ENCODE measurements at regions of chr9 and their contacts with region 1.

Region 1: GRCh38 chr9:26975693-26976059 is 19.5 kb downstream of the IFT74 start:
- DNase-seq: peak; percentile 56
- H3K4me3 ChIP-seq: no peak overlapping the region
- H3K27ac ChIP-seq: no peak overlapping the region
- H3K4me1 ChIP-seq: peaks cover 0 to 3% (median 0%) of the 10 kb centered on the region in 4 donors
- H3K27me3 ChIP-seq: no peaks in the 10 kb centered on the region
- CTCF ChIP-seq: peak; percentile 58 to 70 (median 60)
- EP300 ChIP-seq: no peak
- POLR2A ChIP-seq: no peak

Region 2: DNA sequence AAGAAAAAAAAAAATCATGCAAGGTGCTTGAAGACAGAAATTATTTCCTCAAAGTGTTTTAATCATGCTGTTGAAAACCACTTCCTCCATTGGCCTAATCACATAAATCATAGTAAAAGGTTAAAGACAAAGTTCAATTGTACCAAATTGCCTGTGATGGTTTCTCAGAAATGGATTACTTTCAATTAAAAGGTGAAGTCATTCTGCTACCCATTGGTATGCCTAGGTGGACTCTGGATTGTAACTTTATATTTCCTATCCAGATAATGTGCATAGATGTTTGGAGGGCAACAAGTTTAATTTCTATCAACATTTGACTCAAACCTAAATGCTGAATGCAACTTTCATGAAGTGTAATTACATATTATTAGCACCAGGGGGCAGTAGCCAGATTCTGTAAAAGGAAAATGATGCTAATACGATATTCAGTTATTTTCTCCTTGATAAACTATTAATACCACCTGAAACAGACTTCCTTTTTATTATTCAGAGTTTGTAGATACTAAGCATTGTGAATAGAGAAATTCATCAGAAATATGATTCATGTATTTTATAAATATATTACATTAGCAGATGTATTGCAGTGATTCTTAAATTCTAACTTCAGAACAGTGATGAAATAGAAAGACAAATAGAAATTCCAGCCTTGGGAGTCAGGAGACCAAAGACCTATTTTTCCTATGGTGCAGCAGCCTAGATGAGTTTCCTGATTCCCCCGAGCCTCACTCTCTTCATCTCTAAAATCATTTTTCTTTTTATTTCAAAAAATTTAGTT is 231.3 kb before region 1 on chr9:
- in situ Hi-C with region 1: loop called (anchors 10 to 25 kb)
- intact Hi-C with region 1: loop called (anchors 5 kb)
- DNase-seq: no peak
- H3K4me3 ChIP-seq: no peak overlapping the region
- H3K27ac ChIP-seq: no peak overlapping the region
- H3K4me1 ChIP-seq: no peaks in the 10 kb centered on the region
- H3K27me3 ChIP-seq: no peaks in the 10 kb centered on the region
- CTCF ChIP-seq: peak; percentile 69 to 85 (median 75)
- EP300 ChIP-seq: no peak
- POLR2A ChIP-seq: no peak

Region 3: DNA sequence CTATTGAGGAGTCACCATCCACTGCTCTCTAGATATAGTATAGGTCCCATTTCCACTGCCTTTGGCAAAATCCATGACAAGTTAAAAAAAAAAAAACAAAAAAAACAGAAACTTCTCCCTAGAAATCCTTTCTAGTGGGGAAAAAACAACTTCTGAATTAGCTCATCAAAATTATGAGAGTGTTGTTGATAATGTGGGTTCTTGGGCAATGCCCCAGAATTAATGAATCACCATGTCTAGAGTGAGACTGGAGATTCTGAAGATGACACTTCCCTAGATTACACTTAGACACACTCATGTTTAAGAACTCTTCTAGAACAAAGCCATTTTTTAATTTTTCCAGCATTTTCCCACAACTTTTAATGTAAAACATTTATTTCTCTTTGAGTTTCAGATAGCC is 1325.6 kb after region 1 on chr9:
- in situ Hi-C with region 1: no loop called
- intact Hi-C with region 1: no loop called
- DNase-seq: no peak
- H3K4me3 ChIP-seq: no peak overlapping the region
- H3K27ac ChIP-seq: no peak overlapping the region
- H3K4me1 ChIP-seq: no peaks in the 10 kb centered on the region
- H3K27me3 ChIP-seq: no peaks in the 10 kb centered on the region
- CTCF ChIP-seq: no peak
- EP300 ChIP-seq: no peak
- POLR2A ChIP-seq: no peak